HEK293T (cell line): ENCODE measurements at regions of chr14 and their contacts with region 1.

Region 1: DNA sequence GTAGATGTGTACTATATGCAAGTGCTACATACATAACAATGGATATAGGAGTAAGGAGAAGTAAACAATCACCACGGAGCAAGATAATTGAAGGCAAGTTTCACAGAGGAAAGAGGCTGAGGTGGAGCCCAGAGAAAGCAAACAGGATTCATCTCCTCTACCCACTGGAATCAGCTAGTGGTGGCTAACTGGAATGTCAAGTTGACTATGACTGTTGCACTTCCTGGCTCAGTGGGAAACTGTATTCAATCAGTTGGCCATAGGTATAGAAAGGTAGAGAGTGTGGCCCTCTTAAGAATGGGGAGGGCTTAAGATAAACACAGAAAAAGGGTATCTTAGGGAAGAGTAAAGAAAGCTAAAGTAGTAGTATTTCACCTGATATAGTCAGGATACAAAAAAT is 62.4 kb downstream of the MAP4K5 start:
- DNase-seq: no peak

Region 2: GRCh38 chr14:50093496-50093895 is 376.5 kb before region 1 on chr14:
- CTCF ChIA-PET with region 1: interaction called, 11 read pairs
- POLR2A ChIA-PET with region 1: no interaction called
- DNase-seq: no peak

Region 3: DNA sequence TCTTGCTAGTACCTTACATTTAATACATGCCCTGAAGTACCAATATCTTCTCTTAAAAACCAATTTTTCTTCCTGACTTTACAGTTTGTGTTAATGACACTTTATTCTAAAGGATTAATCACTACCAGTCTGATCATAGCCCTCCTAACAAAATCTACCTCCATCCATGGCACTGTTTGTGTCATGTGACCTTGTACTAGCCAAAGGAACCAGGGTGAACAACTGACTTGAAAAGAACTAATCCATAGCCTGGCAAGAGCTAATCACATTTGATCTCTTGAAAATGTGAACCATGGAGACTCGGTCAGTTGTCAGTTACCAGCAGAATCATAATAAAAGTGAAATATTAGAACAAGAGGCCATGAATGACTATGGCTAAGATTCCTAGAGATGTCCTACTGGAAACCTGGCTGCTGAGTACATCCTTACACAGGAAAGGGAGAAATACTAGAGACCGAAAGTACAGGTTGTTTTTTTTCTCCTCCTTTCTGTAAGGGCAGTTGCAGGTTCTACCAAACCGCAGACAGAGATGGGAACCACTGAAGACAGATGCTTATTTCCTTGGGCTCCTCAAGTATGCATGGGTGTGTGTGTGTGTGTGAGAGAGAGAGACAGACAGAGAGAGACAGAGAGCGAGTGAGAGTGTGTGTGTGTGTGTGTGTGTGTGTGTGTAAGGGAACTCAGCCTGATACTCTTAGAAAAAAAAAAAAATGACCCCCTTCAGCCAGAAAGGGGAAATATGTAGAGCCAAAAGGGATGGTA is 19.7 kb after region 1 on chr14:
- CTCF ChIA-PET with region 1: no interaction called
- POLR2A ChIA-PET with region 1: no interaction called
- DNase-seq: no peak